Natural killer cell (primary cell): ENCODE measurements at regions of chrX and their contacts with region 1.

Region 1: GRCh38 chrX:73855546-73855945 is 292.5 kb downstream of the CHIC1 start:
- DNase-seq: peak; percentile 27 to 76
- ATAC-seq: peak in 2 of 3 donors; percentile 52
- H3K4me3 ChIP-seq: no peak overlapping the region
- H3K4me3 Mint-ChIP-seq: no peak overlapping the region
- H3K27ac ChIP-seq: no peak overlapping the region
- H3K27ac Mint-ChIP-seq: no peak overlapping the region
- H3K4me1 ChIP-seq: no peaks in the 10 kb centered on the region
- H3K4me1 Mint-ChIP-seq: peaks cover 0 to 6% of the 10 kb centered on the region in 2 donors
- H3K27me3 ChIP-seq: no peaks in the 10 kb centered on the region
- H3K27me3 Mint-ChIP-seq: peaks cover 0 to 6% of the 10 kb centered on the region in 2 donors
- CTCF ChIP-seq: peak; percentile 54

Region 2: GRCh38 chrX:73962948-73963347 is 107.4 kb after region 1 on chrX:
- intact Hi-C with region 1: no loop called
- DNase-seq: no peak
- ATAC-seq: no peak
- H3K4me3 ChIP-seq: no peak overlapping the region
- H3K4me3 Mint-ChIP-seq: no peak overlapping the region
- H3K27ac ChIP-seq: no peak overlapping the region
- H3K27ac Mint-ChIP-seq: no peak overlapping the region
- H3K4me1 ChIP-seq: no peaks in the 10 kb centered on the region
- H3K4me1 Mint-ChIP-seq: peaks cover 32 to 67% of the 10 kb centered on the region in 2 donors
- H3K27me3 ChIP-seq: no peaks in the 10 kb centered on the region
- H3K27me3 Mint-ChIP-seq: no peaks in the 10 kb centered on the region
- CTCF ChIP-seq: no peak

Region 3: DNA sequence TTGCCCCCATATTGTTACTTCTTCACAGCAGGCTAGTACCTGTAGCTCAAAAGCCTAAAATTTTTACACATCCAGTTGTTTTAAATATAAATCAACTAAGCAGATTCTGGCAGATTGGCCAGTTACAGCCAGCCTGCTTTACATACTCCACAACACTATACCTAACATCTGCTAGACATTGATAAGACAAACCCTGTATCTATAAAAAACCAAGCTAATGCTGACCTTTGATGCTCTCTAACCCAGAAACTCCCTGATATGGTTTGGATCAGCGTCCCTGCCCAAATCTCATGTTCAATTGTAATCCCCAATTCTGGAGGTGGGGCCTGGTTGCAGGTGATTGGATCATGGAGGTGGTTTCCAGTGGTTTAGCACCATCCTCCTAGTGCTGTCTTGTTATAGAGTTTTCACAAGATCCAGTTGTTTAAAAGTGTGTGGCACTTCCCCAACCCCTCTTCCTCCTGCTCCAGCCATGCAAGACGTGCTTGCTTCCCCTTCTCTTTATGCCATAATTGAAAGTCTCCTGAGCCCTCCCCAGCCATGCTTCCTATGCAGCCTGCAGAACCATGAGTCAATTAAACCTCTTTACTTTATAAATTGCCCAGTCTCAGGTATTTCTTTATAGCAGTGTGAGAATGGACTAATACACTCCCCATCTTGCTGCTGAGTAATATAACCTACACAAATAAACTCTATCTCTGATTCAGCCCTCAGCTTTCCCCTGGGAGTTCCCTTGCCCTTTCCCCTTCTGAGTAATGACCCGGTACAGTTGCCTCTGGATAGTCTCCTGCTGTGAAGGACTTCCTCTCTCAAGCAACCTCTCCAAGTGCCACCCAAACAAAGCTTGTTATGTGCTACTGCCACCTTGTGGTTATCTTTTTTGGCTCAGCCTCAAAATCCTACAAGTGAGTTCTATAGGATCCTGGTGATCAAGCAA is 488.1 kb after region 1 on chrX:
- intact Hi-C with region 1: loop called (anchors 1 kb)
- DNase-seq: peak in 1 of 2 donors; percentile 72
- ATAC-seq: peak; percentile 49 to 73 (median 49)
- H3K4me3 ChIP-seq: no peak overlapping the region
- H3K4me3 Mint-ChIP-seq: no peak overlapping the region
- H3K27ac ChIP-seq: no peak overlapping the region
- H3K27ac Mint-ChIP-seq: no peak overlapping the region
- H3K4me1 ChIP-seq: no peaks in the 10 kb centered on the region
- H3K4me1 Mint-ChIP-seq: peaks cover 0 to 6% of the 10 kb centered on the region in 2 donors
- H3K27me3 ChIP-seq: no peaks in the 10 kb centered on the region
- H3K27me3 Mint-ChIP-seq: peaks cover 7 to 31% of the 10 kb centered on the region in 2 donors
- CTCF ChIP-seq: peak; percentile 53

Region 4: GRCh38 chrX:74656079-74656745 is 800.7 kb after region 1 on chrX:
- intact Hi-C with region 1: no loop called
- DNase-seq: no peak
- ATAC-seq: no peak
- H3K4me3 ChIP-seq: no peak overlapping the region
- H3K4me3 Mint-ChIP-seq: no peak overlapping the region
- H3K27ac ChIP-seq: no peak overlapping the region
- H3K27ac Mint-ChIP-seq: no peak overlapping the region
- H3K4me1 ChIP-seq: no peaks in the 10 kb centered on the region
- H3K4me1 Mint-ChIP-seq: no peaks in the 10 kb centered on the region
- H3K27me3 ChIP-seq: peaks cover 2% of the 10 kb centered on the region
- H3K27me3 Mint-ChIP-seq: peaks cover 0 to 2% of the 10 kb centered on the region in 2 donors
- CTCF ChIP-seq: no peak